ENCODE measurements at regions of chr7 and their contacts with region 1.

Region 1: GRCh38 chr7:128809363-128809762 is 17.6 kb downstream of the CCDC136 start:
- DNase-seq: no peak
- H3K4me3 ChIP-seq: no peak overlapping the region
- H3K4me3 Mint-ChIP-seq: no peak overlapping the region
- H3K27ac ChIP-seq: no peak overlapping the region
- H3K27ac Mint-ChIP-seq: no peak overlapping the region
- H3K4me1 ChIP-seq: no peaks in the 10 kb centered on the region
- H3K4me1 Mint-ChIP-seq: no peaks in the 10 kb centered on the region
- H3K27me3 ChIP-seq: no peaks in the 10 kb centered on the region
- H3K27me3 Mint-ChIP-seq: no peaks in the 10 kb centered on the region

Region 2: GRCh38 chr7:128770233-128770632 is 39.1 kb before region 1 on chr7:
- CTCF ChIA-PET with region 1: no interaction called
- POLR2A ChIA-PET with region 1: no interaction called
- intact Hi-C with region 1: loop called (anchors 1 kb)
- DNase-seq: no peak
- H3K4me3 ChIP-seq: no peak overlapping the region
- H3K4me3 Mint-ChIP-seq: no peak overlapping the region
- H3K27ac ChIP-seq: no peak overlapping the region
- H3K27ac Mint-ChIP-seq: peak overlapping the region in 1 of 7 donors; percentile 22
- H3K4me1 ChIP-seq: no peaks in the 10 kb centered on the region
- H3K4me1 Mint-ChIP-seq: peaks cover 0 to 1% (median 0%) of the 10 kb centered on the region in 4 donors
- H3K27me3 ChIP-seq: no peaks in the 10 kb centered on the region
- H3K27me3 Mint-ChIP-seq: no peaks in the 10 kb centered on the region

Region 3: GRCh38 chr7:128904381-128905197 is 95.2 kb after region 1 on chr7:
- CTCF ChIA-PET with region 1: no interaction called
- POLR2A ChIA-PET with region 1: no interaction called
- intact Hi-C with region 1: no loop called
- DNase-seq: peak in 4 of 5 donors; percentile 57 to 72 (median 65)
- H3K4me3 ChIP-seq: no peak overlapping the region
- H3K4me3 Mint-ChIP-seq: peak overlapping the region in 1 of 8 donors; percentile 13
- H3K27ac ChIP-seq: no peak overlapping the region
- H3K27ac Mint-ChIP-seq: peak overlapping the region in 1 of 7 donors; percentile 22
- H3K4me1 ChIP-seq: no peaks in the 10 kb centered on the region
- H3K4me1 Mint-ChIP-seq: peaks cover 0 to 3% (median 0%) of the 10 kb centered on the region in 4 donors
- H3K27me3 ChIP-seq: no peaks in the 10 kb centered on the region
- H3K27me3 Mint-ChIP-seq: peaks cover 16 to 31% of the 10 kb centered on the region in 2 donors

Measured in CD4-positive, alpha-beta memory T cell (primary cell).